ENCODE measurements at regions of chrX and their contacts with region 1.

Region 1: DNA sequence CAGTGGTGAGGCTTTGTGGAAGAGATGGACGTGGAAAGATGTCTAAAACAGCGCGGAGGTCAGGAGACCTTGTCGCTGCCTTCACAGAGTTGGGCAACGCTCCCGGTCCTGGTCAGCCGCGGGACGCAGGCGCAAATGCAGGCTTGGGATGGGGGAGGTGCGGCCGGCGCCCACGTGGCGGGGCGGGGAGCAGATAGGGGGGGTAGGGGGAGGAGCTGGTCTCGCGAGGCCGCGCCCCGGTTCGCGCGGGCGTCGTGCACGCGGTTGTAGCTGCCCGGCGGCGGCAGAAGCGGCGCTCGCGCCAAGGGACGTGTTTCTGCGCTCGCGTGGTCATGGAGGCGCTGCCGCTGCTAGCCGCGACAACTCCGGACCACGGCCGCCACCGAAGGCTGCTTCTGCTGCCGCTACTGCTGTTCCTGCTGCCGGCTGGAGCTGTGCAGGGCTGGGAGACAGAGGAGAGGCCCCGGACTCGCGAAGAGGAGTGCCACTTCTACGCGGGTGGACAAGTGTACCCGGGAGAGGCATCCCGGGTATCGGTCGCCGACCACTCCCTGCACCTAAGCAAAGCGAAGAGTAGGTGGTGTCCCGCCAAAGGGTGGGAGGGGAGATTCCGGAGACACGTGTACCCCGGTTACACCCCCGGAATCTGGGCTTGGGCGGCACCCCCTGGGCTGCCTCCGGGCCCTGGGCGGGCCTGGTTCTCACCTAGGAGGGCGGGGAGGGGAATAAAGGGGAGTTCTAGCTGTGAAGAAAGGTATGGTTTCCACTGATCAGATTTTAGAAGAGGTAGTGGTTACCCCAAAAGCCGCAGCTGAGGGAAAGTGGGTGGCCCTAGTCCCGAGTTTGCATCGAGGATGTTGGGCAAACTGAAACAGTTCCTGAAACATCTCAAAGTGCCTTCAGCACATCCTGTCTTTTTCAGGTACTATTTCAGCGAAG is at the start of gene PRDX4:
- DNase-seq: peak; percentile 87
- H3K4me3 Mint-ChIP-seq: peak within 1 kb of the TSS; percentile 80
- H3K27ac Mint-ChIP-seq: peak within 1 kb of the TSS; percentile 87
- H3K4me1 Mint-ChIP-seq: peaks cover 23% of the 10 kb centered on the region
- H3K27me3 Mint-ChIP-seq: no peaks in the 10 kb centered on the region
- total RNA-seq, gene PRDX4: 56.0 to 59.8 TPM

Region 2: GRCh38 chrX:21940356-21940829 is 1727.1 kb before region 1 on chrX and contains the start of gene SMS:
- CTCF ChIA-PET with region 1: no interaction called
- POLR2A ChIA-PET with region 1: no interaction called
- intact Hi-C with region 1: loop called (anchors 10 kb)
- DNase-seq: peak; percentile 72
- H3K4me3 Mint-ChIP-seq: peak within 1 kb of the TSS; percentile 84
- H3K27ac Mint-ChIP-seq: peak within 1 kb of the TSS; percentile 88
- H3K4me1 Mint-ChIP-seq: peaks cover 25% of the 10 kb centered on the region
- H3K27me3 Mint-ChIP-seq: no peaks in the 10 kb centered on the region
- total RNA-seq, gene SMS: 119 to 120 TPM

Region 3: DNA sequence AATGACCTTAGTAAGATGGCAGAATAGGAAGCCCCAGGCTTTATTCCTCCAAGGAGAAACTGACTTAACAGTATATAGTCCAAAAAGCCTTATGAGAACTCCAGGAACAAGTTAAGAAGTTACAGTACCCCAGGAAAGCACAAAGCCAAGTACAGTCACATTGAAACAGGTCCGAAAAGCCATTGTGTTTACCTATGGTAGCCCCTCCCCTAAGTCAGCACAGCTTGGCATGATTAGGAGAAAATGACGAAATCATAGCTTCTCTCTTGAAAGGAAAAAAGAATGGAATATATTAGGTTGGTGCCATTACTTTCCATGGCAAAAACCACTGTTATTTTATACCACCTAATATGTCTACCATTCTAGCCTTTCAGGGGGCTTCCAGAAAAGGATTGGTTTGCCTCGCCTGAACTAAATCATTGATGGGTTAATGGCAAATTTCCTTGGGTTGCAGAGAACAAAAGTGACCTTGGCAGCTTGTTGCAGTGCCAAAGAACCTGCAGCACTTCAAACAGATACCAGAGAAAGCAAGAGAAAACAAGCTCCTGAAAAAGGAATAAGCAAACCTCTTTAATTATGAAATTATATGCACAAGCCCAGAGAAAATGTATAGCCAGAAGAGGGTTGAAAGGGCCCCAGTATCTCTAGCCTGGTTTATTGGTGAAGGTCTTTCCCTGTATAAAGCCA is 202.3 kb before region 1 on chrX:
- CTCF ChIA-PET with region 1: no interaction called
- POLR2A ChIA-PET with region 1: no interaction called
- intact Hi-C with region 1: no loop called
- DNase-seq: no peak
- H3K4me3 Mint-ChIP-seq: no peak overlapping the region
- H3K27ac Mint-ChIP-seq: no peak overlapping the region
- H3K4me1 Mint-ChIP-seq: no peaks in the 10 kb centered on the region
- H3K27me3 Mint-ChIP-seq: no peaks in the 10 kb centered on the region

Region 4: GRCh38 chrX:23732704-23733103 is 65.2 kb after region 1 on chrX:
- CTCF ChIA-PET with region 1: no interaction called
- POLR2A ChIA-PET with region 1: no interaction called
- intact Hi-C with region 1: loop called (anchors 2 kb)
- DNase-seq: no peak
- H3K4me3 Mint-ChIP-seq: peak overlapping the region; percentile 7
- H3K27ac Mint-ChIP-seq: peak overlapping the region; percentile 92
- H3K4me1 Mint-ChIP-seq: peaks cover 33% of the 10 kb centered on the region
- H3K27me3 Mint-ChIP-seq: no peaks in the 10 kb centered on the region

Region 5: DNA sequence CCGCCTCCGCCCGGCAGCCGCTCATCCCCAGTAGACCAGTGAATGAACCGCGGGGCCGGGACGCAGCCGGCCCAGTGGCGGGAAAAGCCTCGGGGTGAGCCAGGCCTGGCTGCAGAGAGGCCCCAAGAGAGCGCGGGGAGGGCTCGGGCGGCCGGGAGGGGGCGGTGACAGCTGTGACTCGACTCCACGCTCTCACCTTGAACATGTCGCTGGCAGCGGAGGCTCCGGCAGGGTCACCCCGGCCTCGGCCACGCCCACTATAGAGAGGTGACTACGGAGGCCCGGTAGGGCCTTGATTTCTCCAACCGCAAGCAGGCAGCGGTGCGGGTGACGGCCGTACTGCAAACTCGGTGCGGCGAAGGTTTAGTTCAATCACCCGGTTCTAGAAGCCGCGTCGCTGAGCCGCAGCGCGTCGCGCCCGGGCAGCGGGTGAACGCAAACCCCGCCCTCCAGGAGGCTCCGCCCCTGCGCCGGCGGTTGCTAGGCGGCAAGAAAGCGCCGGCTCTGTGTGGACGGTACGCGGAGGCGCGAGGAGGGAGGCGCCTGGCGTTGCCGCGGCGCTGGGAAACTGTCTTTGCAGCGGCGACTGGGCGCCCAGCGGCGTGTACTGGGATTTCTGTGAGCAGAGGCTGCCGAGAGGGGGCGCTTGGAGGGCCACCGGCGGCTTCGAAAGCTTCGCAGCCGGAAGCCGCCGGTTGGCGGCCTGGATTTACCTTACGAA is 240.2 kb after region 1 on chrX and contains the starts of genes APOO and CXorf58:
- CTCF ChIA-PET with region 1: interaction called, 5 read pairs
- POLR2A ChIA-PET with region 1: no interaction called
- intact Hi-C with region 1: loop called (anchors 1 kb)
- DNase-seq: peak; percentile 94
- H3K4me3 Mint-ChIP-seq: peak within 1 kb of the TSS; percentile 74
- H3K27ac Mint-ChIP-seq: peak within 1 kb of the TSS; percentile 87
- H3K4me1 Mint-ChIP-seq: peaks cover 21% of the 10 kb centered on the region
- H3K27me3 Mint-ChIP-seq: no peaks in the 10 kb centered on the region
- total RNA-seq, gene APOO: 32.8 to 35.0 TPM
- total RNA-seq, gene CXorf58: 0.17 TPM in 1 of 2 experiments, not detected in the other

Region 6: GRCh38 chrX:24479924-24480323 is 812.4 kb after region 1 on chrX:
- CTCF ChIA-PET with region 1: no interaction called
- POLR2A ChIA-PET with region 1: no interaction called
- intact Hi-C with region 1: loop called (anchors 10 kb)
- DNase-seq: peak; percentile 85
- H3K4me3 Mint-ChIP-seq: peak overlapping the region; percentile 69
- H3K27ac Mint-ChIP-seq: peak overlapping the region; percentile 97
- H3K4me1 Mint-ChIP-seq: peaks cover 63% of the 10 kb centered on the region
- H3K27me3 Mint-ChIP-seq: no peaks in the 10 kb centered on the region

Measured in activated CD4-positive, alpha-beta memory T cell treated with anti-CD3 and anti-CD28 coated beads for 36 hours (primary cell).